GM18951 (cell line): ENCODE measurements at regions of chr12 and their contacts with region 1.

Region 1: GRCh38 chr12:92784795-92785562 is 82.2 kb downstream of the PLEKHG7 start:
- POLR2A ChIP-seq: no peak

Region 2: DNA sequence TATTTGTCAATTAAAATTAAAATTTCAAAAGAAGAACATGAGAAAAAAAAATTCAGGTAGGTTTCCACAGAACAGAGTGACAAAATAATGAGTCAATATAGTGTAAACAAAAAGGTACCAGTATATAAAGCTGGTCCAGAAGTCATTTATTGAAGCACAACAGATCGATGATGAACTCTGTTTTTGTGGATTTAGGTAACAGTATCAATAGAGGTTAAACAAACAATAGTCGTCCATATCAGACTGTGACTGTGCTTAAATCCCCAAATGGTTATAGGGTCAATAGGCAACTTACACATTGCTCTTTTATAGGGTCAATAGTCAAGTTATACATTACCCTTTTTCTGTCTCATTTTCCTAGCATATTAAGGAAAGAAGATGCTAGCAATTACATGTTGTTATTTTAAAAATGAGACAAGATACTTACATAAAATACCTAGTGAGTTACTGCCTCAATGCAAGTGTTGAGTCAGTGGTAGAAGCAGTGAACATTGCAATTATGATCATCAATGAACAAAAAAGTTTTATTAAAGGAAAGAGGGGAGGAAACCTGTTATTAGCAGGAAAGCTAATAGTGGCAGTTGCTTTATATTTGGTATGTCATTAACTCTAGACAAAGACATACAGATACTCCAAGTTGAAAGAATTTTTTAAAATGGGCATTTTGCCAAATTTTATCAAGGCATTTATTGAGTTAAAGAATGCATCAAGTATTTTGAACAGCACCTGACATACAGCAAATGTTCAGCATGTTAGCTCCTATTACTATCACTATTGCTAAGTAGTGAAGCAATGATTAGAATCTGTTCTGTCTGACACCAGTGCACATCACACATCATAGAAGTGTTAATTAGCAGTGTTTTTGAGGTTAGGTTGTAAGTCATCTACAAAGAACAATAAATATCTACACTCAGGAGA is 1932.9 kb before region 1 on chr12:
- in situ Hi-C with region 1: no loop called
- POLR2A ChIP-seq: no peak

Region 3: DNA sequence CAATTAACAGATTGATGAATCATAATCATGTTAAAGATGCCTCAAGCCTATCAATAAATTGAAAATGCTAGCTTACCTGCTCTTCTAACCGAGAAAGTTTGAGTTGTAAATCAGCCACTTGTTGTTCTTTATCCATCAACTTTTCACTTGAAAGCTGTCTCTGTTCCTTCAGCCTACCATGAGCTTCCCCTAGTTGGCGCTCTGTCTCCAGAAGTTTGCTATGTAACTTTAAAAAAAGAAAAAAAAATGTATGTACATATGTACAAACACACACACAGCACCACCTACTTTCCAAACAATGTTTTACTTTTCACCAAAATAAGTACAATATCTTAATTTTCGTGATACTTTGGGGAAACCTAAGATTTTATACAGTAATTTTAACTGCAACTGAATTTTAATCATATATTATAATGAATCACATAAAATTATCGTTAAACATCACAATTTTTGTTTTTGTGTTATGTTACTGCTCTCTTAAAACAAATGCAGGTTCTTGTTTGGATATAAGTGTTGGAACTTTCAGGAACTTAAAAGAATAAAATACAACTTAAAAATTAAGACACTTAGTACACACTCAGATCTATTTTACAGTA is 43.0 kb after region 1 on chr12:
- in situ Hi-C with region 1: no loop called
- POLR2A ChIP-seq: no peak

Region 4: GRCh38 chr12:92987362-92987761 is 202.4 kb after region 1 on chr12:
- in situ Hi-C with region 1: loop called (anchors 10 kb)
- POLR2A ChIP-seq: no peak

Region 5: DNA sequence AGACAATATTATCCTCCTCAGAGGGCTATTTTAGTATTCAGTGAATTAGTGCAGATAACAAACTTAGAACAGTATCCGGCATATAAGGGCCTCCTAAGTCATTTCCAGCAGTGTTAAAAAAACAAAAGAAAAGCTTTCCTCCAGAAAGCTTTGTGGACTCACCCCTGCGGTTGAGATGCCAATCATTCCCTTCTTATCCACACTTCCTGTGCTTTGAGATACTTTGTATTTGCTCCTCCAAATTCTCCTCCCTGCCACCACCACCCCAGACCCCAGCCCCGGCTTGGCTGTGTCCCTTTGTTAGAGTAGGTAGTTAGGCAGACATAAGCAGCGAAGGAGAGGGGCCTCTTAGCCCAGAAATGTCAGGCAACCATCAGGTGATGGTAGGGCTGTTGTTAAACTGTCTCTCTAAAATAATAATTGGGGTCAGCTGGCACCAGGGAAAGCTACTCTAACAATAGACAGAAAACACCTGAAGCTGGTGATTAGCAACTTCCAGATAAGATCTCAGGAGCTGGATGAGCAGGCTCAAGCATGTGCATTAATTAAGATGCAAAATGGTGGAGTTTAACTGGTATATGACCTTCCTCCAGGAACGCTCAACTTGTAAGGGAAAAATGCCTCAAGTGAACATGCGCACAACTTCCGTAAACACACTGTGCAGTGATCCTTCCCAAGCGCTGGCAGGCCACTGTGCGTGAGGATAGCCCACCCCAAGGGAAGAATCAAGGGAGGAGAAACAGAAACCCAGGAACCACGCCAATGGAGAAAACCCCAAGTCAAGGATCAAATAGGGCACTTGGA is 296.2 kb after region 1 on chr12:
- in situ Hi-C with region 1: no loop called
- POLR2A ChIP-seq: no peak

Region 6: GRCh38 chr12:93419388-93420034 is 634.5 kb after region 1 on chr12:
- in situ Hi-C with region 1: loop called (anchors 25 kb)
- POLR2A ChIP-seq: no peak

Region 7: GRCh38 chr12:94101738-94102660 is 1317.0 kb after region 1 on chr12:
- in situ Hi-C with region 1: loop called (anchors 25 kb)
- POLR2A ChIP-seq: no peak